ENCODE measurements at regions of chr4 and their contacts with region 1.

Region 1: DNA sequence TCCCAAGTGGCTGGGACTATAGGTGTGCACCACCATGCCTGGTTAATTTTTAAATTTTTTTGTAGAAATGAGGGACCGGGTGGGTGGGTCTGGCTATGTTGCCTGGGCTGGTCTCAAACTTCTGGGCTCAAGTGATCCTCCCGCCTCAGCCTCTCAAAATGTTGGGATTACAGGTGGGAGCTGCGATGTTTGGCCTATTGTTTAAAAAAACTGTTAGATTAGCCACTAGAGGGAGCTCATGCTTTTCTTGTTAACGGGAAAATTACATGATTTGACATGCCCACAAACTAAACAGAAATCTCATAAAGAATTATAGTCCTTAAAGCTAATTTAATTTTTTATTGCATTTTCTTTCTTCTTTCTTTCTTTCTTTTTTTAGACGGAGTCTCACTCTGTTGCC is 5.0 kb upstream of the SDAD1 start:
- DNase-seq: no peak

Region 2: GRCh38 chr4:76067652-76068286 is 72.0 kb after region 1 on chr4:
- intact Hi-C with region 1: loop called (anchors 2 kb)
- DNase-seq: no peak

Region 3: DNA sequence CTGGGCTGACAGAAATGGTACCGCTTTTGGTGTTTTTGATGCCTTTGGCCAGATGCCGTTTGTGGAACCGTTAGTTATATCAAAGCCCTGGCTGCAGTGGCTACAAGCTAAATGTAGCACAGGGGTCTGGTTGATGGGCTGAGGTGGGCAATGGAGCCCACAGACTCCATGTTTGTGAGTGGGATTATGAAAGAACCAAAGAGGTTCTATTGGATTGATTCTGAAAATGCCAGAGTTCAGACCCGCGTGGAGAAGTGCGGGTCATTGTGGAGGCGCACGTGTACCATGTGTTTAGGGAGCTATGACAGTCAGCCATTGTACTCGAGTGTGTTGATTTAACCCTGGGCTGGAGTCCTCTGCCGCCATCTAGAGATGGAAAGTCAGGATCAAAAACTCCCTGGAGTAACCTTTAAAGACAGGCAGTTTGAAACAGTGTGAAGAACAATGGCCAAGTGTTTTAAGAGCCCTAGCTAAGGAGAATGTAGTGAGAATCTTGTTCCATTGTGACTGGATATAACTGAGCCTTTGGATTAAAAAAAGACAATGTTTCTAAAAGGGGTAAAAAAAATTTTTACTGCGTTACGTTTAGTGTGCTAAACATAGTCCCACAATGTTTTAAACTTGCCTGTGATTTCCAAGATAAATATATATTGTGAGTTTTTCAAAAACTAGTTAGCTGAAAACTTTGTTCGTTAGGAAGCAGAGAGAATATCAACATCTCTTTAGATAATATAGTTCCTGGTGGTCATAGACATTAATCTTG is 91.5 kb after region 1 on chr4:
- intact Hi-C with region 1: loop called (anchors 5 kb)
- DNase-seq: no peak

Region 4: DNA sequence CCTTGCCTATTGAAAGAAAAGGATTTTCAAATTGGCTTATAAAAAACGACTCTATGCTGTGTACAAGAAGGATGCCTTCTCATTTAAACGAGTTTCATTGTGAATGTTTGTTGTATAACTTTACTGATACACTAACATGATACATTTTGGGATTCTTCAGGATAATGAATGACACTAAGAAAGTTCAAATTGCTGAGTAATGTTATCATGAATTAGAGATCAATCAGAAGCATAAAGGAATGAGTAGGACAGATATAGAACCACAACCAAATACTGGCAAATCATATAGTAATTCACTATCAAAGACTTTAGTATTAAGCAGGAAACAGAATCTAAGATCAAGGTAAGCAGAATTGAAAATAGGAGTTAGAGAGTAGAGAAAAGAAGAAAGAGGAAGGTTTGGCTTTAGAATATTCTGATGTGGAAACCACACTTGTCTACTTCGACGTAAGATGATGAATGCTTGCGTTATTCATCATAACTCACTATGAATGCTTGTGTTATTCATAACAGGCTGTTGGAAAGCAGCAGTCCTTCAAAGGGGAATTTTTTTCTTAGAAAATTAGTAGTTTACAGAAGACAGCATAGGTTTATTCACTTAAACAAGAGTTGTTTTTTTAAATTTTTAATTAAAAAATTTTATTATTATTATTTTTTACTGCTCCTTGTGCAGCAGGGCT is 411.9 kb after region 1 on chr4:
- intact Hi-C with region 1: no loop called
- DNase-seq: no peak

Measured in cardiac septum (tissue), 1 donor.